Vagina (tissue), 2 donors: ENCODE measurements at regions of chr6 and their contacts with region 1.

Region 1: DNA sequence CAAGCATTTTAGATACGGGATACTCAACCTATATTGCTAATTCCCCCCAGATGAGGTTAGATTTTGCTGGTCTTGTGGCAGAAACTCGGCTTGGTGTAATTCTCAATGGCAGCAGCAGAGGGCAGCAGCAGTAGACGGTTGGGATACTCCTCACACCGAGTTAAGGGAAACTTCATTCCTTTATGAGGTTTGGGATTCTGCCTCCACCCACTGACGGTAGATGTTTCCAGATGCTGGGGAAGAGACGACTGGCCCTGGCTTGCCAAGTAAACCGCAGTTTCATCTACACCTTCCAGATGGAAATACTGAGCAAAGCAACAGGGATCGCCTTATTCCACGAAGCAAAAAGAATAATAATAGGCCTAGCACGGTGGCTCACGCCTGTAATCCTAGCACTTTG is 8.2 kb upstream of the TBC1D7 start:
- DNase-seq: no peak
- H3K4me3 ChIP-seq: no peak overlapping the region
- H3K27ac ChIP-seq: no peak overlapping the region
- H3K4me1 ChIP-seq: peaks cover 8% of the 10 kb centered on the region
- H3K27me3 ChIP-seq: no peaks in the 10 kb centered on the region
- CTCF ChIP-seq: peak; percentile 84 to 97 (median 84)
- POLR2A ChIP-seq: no peak

Region 2: DNA sequence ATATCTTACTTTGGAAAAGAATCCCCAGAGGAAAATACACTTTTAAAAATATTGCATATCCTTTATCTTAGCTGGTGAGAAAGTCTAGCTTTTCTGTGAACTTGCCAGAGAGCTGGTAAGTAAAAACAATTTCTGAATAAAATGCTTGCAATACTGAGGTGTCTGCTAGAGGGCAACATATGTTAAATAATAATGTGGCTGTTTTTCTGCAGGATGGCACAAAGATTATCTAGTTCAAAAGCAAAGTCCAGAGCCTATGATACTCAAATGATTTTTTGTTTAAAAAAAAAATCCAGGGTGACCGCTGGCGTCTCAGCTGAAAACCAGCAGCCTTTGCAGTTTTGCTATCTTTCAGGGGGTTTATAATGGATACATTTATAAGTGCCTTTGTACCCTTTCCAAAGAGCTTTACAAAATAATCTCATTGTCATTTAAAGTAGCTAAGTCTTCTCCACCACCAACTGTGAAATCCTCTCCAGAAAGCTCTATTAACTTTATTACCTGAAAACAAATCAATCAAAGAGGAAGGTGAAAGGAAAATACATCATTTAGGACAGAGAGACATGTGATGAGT is 425.1 kb before region 1 on chr6:
- intact Hi-C with region 1: loop called (anchors 5 kb)
- DNase-seq: no peak
- H3K4me3 ChIP-seq: no peak overlapping the region
- H3K27ac ChIP-seq: no peak overlapping the region
- H3K4me1 ChIP-seq: no peaks in the 10 kb centered on the region
- H3K27me3 ChIP-seq: no peaks in the 10 kb centered on the region
- CTCF ChIP-seq: peak; percentile 20 to 51 (median 43)
- POLR2A ChIP-seq: no peak

Region 3: GRCh38 chr6:13538084-13538483 is 201.5 kb after region 1 on chr6:
- intact Hi-C with region 1: loop called (anchors 5 kb)
- DNase-seq: no peak
- H3K4me3 ChIP-seq: no peak overlapping the region
- H3K27ac ChIP-seq: no peak overlapping the region
- H3K4me1 ChIP-seq: no peaks in the 10 kb centered on the region
- H3K27me3 ChIP-seq: no peaks in the 10 kb centered on the region
- CTCF ChIP-seq: peak in 2 of 3 experiments; percentile 30 to 65
- POLR2A ChIP-seq: no peak